Lower lobe of right lung (tissue), 2 donors: ENCODE measurements at regions of chr6 and their contacts with region 1.

Region 1: DNA sequence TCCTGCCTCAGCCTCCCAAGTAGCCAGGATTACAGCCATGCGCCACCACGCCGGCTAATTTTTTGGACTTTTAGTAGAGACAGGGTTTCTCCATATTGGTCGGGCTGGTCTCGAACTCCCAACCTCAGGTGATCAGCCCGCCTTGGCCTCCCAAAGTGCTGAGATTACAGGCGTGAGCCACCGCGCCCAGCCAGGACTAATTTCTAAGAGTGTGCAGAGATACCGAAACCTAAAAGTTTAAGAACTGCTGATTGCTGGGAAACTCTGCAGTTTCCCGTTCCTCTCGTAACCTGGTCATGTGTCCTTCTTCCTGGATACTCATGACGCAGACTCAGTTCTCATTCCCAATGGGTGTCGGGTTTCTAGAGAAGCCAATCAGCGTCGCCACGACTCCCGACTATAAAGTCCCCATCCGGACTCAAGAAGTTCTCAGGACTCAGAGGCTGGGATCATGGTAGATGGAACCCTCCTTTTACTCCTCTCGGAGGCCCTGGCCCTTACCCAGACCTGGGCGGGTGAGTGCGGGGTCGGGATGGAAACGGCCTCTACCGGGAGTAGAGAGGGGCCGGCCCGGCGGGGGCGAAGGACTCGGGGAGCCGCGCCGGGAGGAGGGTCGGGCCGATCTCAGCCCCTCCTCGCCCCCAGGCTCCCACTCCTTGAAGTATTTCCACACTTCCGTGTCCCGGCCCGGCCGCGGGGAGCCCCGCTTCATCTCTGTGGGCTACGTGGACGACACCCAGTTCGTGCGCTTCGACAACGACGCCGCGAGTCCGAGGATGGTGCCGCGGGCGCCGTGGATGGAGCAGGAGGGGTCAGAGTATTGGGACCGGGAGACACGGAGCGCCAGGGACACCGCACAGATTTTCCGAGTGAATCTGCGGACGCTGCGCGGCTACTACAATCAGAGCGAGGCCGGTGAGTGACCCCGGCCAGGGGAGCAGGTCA is at the start of gene HLA-E:
- DNase-seq: peak; percentile 94
- ATAC-seq: peak; percentile 96
- H3K4me3 ChIP-seq: peak within 1 kb of the TSS; percentile 93
- H3K27ac ChIP-seq: peak within 1 kb of the TSS; percentile 98
- H3K4me1 ChIP-seq: peaks cover 42% of the 10 kb centered on the region
- H3K27me3 ChIP-seq: no peaks in the 10 kb centered on the region
- CTCF ChIP-seq: no peak
- total RNA-seq, gene HLA-E: 1,079 TPM

Region 2: DNA sequence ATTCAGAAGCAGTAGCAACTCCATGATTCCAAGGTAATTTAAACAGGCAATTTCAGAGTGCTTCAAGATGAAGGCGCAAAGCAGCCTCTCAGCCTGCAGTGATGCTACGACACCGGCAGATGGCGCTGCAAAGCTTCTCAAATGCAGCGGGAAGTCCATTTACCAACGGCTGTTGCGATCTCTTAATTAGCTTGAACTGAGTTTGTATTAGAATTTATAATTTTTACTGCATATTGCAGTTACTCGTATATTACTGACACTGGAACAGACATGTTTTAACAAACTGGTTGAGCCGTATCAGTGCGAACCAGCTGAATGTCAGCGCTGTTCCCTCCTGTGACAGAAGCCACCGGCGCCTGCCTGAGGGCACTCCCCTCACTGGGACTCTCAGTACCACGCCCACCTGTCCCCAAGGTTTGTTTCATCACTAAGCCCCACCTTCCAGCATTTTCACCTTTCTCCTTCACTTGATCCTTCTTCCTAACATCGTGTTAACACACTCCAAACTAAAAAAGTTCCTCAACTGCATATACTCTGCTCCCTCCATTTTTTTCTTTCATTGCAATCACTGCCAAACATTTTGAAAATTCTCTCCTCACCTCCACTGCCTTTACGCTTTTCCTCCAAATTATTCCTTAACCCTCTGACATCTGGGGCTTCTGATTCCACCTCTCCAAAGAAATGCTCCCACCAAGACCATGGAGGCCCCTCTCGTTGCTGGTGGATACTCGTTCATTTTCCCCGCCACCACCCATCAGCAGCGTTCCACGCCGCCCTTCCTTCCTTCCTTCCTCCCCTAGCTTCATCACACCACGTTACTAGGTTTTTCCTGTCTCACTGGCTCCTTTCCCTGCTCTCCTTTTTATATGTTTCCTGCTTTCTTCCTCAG is 52.4 kb after region 1 on chr6:
- intact Hi-C with region 1: loop called (anchors 10 kb)
- DNase-seq: peak; percentile 83
- ATAC-seq: peak; percentile 85
- H3K4me3 ChIP-seq: peak overlapping the region; percentile 47
- H3K27ac ChIP-seq: peak overlapping the region; percentile 76
- H3K4me1 ChIP-seq: peaks cover 31% of the 10 kb centered on the region
- H3K27me3 ChIP-seq: no peaks in the 10 kb centered on the region
- CTCF ChIP-seq: peak; percentile 99